ENCODE measurements at regions of chr11 and their contacts with region 1.

Region 1: GRCh38 chr11:111283945-111284481 is 14.3 kb upstream of the POU2AF3 start:
- DNase-seq: no peak
- ATAC-seq: peak; percentile 67
- H3K4me3 Mint-ChIP-seq: peak overlapping the region; percentile 58
- H3K27ac Mint-ChIP-seq: no peak overlapping the region
- H3K4me1 Mint-ChIP-seq: peaks cover 13% of the 10 kb centered on the region
- H3K27me3 Mint-ChIP-seq: no peaks in the 10 kb centered on the region
- CTCF ChIP-seq: no peak

Region 2: DNA sequence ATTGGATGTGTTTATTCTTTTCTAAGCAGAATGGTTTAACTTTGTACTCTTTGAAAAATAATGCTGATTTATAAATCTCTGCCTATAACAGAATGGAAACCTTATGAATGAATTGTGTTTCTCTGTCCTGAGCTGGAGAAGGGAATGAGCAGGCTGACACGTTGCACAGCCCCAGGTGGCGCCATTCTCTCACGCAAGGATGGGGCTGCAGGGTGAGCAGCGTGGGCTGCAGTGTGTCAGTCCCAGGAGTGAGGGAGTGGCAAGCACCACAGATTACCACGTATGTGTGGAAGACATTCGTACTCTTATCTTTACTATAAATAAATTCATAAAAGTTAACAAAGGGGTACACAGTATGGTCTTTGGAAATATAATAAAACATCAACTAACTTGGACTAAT is 820.9 kb before region 1 on chr11:
- CTCF ChIA-PET with region 1: interaction called, 5 read pairs
- POLR2A ChIA-PET with region 1: no interaction called
- intact Hi-C with region 1: loop called (anchors 5 kb)
- DNase-seq: no peak
- ATAC-seq: peak; percentile 61
- H3K4me3 Mint-ChIP-seq: no peak overlapping the region
- H3K27ac Mint-ChIP-seq: no peak overlapping the region
- H3K4me1 Mint-ChIP-seq: no peaks in the 10 kb centered on the region
- H3K27me3 Mint-ChIP-seq: no peaks in the 10 kb centered on the region
- CTCF ChIP-seq: no peak

Region 3: GRCh38 chr11:111359223-111360149 is 75.5 kb after region 1 on chr11:
- CTCF ChIA-PET with region 1: interaction called, 6 read pairs
- POLR2A ChIA-PET with region 1: interaction called, 3 read pairs
- intact Hi-C with region 1: loop called (anchors 2 kb)
- DNase-seq: no peak
- ATAC-seq: peak; percentile 51
- H3K4me3 Mint-ChIP-seq: no peak overlapping the region
- H3K27ac Mint-ChIP-seq: no peak overlapping the region
- H3K4me1 Mint-ChIP-seq: peaks cover 24% of the 10 kb centered on the region
- H3K27me3 Mint-ChIP-seq: no peaks in the 10 kb centered on the region
- CTCF ChIP-seq: no peak

Region 4: DNA sequence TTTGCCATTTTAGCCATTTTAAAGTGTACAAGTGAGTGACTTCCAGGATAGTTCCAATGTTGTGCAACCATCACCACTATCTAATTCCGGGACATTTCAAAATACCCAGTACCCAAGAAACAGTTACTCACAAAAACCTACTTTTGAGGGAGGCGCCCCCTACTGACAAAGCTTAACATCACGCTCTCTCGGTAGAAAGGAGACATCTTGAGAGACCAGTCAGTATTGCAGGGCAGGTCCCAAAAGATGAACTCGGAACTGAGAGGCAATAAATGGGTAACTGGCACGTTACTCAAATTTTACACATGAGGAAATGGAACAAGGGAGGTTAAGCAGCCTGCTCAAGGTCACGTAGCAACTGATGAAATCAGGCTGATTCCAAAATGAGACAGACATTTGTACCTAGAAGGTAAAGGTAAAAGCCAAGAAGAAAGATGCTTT is 145.1 kb after region 1 on chr11:
- CTCF ChIA-PET with region 1: interaction called, 231 read pairs
- POLR2A ChIA-PET with region 1: interaction called, 12 read pairs
- intact Hi-C with region 1: loop called (anchors 1 kb)
- DNase-seq: no peak
- ATAC-seq: peak; percentile 91
- H3K4me3 Mint-ChIP-seq: no peak overlapping the region
- H3K27ac Mint-ChIP-seq: no peak overlapping the region
- H3K4me1 Mint-ChIP-seq: peaks cover 4% of the 10 kb centered on the region
- H3K27me3 Mint-ChIP-seq: peaks cover 2% of the 10 kb centered on the region
- CTCF ChIP-seq: no peak

Region 5: GRCh38 chr11:111565114-111565720 is 281.2 kb after region 1 on chr11:
- CTCF ChIA-PET with region 1: no interaction called
- POLR2A ChIA-PET with region 1: no interaction called
- intact Hi-C with region 1: loop called (anchors 5 kb)
- DNase-seq: no peak
- ATAC-seq: peak; percentile 28
- H3K4me3 Mint-ChIP-seq: no peak overlapping the region
- H3K27ac Mint-ChIP-seq: no peak overlapping the region
- H3K4me1 Mint-ChIP-seq: no peaks in the 10 kb centered on the region
- H3K27me3 Mint-ChIP-seq: peaks cover 2% of the 10 kb centered on the region
- CTCF ChIP-seq: peak; percentile 40